IMR-90 (cell line): ENCODE measurements at regions of chr9 and their contacts with region 1.

Region 1: DNA sequence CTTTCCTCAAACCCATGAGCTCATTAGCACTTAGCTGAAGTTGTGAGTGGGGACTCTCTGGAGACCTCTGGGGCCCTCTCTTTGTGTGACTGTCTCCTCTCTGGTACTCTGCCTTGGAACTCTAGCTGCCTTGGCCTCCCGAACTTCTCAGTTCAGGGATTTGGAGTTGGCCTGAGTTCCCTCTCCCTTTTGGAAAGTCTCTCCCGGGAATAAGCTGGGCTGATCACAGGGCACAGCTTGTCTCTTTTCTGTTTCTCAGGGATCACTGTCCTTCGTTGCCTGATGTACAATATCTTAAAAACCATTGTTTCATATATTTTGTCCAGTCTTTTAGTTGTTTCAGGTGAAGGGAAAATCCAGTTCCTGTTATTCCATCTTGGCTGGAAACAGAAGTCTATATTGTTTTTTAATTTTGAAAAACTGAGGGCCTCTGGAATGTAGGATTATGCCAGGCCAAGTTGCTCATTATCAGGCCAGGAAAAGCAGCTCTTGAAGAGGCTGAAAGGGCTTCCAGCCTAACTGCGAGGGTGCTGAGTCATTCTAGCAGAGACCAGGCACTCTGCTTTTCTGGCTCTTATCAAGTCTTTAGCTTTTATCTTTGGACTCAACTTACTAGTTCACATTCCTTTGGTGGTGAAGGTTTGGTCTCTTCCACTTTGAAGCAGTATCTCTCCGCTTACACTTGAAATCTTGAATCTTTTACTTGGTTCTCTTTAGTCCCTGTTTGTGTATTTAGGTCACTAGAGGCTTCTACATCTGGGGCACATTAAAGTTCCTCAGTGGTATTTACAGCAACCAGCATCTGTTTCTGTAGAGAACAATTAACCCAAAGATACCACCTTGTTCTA is 8.4 kb upstream of the RGS3 start:
- DNase-seq: peak; percentile 93
- ATAC-seq: peak; percentile 92
- H3K4me3 ChIP-seq: no peak overlapping the region
- H3K27ac ChIP-seq: peak overlapping the region; percentile 100
- H3K4me1 ChIP-seq: peaks cover 15% of the 10 kb centered on the region
- H3K27me3 ChIP-seq: no peaks in the 10 kb centered on the region
- CTCF ChIP-seq: no peak
- POLR2A ChIP-seq: 0 out of 2 replicates have a peak, but pooled peaks have one; percentile 36
- RAD21 ChIP-seq: 0 out of 2 replicates have a peak, but pooled peaks have one; percentile 11

Region 2: GRCh38 chr9:113485761-113486115 is 30.6 kb after region 1 on chr9:
- CTCF ChIA-PET with region 1: no interaction called
- POLR2A ChIA-PET with region 1: no interaction called
- dilution Hi-C with region 1: no loop called
- in situ Hi-C with region 1: no loop called
- intact Hi-C with region 1: loop called (anchors 1 kb)
- DNase-seq: no peak
- ATAC-seq: no peak; the same call in 1 of the 2 replicates
- H3K4me3 ChIP-seq: no peak overlapping the region
- H3K27ac ChIP-seq: peak overlapping the region; percentile 31
- H3K4me1 ChIP-seq: peaks cover 23% of the 10 kb centered on the region
- H3K27me3 ChIP-seq: no peaks in the 10 kb centered on the region
- CTCF ChIP-seq: no peak
- POLR2A ChIP-seq: no peak
- RAD21 ChIP-seq: no peak

Region 3: DNA sequence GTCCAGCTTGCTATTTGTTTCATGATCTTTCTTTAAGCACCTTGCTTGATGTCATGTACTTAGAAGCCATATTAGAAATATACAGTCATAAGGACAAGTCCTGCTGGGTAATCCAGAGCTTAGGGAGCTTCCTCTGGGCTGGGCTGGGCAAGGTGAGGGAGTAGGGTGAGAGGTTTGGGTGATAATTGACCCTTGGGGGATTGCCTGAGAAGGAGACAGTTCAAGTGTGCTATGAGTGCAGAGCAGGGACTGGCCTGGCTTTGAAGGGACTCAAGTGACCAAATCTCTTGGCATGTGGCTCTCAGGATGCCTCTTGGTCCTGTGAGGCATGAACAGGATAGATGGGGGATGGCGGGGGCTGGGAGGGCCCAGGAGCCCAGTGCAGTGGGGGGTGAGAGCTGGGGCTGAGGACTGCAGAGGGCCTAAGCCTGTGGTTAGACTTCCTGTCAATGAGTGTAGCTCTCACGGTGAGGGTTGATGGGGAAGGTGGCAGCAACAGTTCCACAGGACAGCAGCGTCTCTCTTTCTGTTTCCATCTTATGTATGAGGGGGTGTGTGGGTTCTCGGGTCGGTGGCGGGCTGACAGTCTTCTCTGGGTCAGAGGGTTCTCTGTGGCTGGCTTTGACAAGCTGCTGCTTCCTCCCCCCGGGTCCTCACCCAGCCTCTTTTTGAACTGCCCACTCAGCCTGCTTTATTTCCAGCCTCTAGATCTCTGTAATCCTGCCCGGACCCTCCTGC is 61.9 kb after region 1 on chr9:
- CTCF ChIA-PET with region 1: no interaction called
- POLR2A ChIA-PET with region 1: no interaction called
- dilution Hi-C with region 1: no loop called
- in situ Hi-C with region 1: no loop called
- intact Hi-C with region 1: loop called (anchors 5 kb)
- DNase-seq: peak; percentile 39
- ATAC-seq: no peak
- H3K4me3 ChIP-seq: no peak overlapping the region
- H3K27ac ChIP-seq: no peak overlapping the region
- H3K4me1 ChIP-seq: peaks cover 18% of the 10 kb centered on the region
- H3K27me3 ChIP-seq: peaks cover 4% of the 10 kb centered on the region; the same call in 1 of the 2 replicates
- CTCF ChIP-seq: no peak
- POLR2A ChIP-seq: no peak
- RAD21 ChIP-seq: no peak

Region 4: GRCh38 chr9:113530022-113530635 is 75.0 kb after region 1 on chr9:
- CTCF ChIA-PET with region 1: no interaction called
- POLR2A ChIA-PET with region 1: no interaction called
- dilution Hi-C with region 1: no loop called
- in situ Hi-C with region 1: no loop called
- intact Hi-C with region 1: no loop called
- DNase-seq: no peak
- ATAC-seq: no peak
- H3K4me3 ChIP-seq: no peak overlapping the region
- H3K27ac ChIP-seq: no peak overlapping the region
- H3K4me1 ChIP-seq: peaks cover 2% of the 10 kb centered on the region; the same call in 1 of the 2 replicates
- H3K27me3 ChIP-seq: no peaks in the 10 kb centered on the region
- CTCF ChIP-seq: no peak
- POLR2A ChIP-seq: no peak
- RAD21 ChIP-seq: no peak

Region 5: DNA sequence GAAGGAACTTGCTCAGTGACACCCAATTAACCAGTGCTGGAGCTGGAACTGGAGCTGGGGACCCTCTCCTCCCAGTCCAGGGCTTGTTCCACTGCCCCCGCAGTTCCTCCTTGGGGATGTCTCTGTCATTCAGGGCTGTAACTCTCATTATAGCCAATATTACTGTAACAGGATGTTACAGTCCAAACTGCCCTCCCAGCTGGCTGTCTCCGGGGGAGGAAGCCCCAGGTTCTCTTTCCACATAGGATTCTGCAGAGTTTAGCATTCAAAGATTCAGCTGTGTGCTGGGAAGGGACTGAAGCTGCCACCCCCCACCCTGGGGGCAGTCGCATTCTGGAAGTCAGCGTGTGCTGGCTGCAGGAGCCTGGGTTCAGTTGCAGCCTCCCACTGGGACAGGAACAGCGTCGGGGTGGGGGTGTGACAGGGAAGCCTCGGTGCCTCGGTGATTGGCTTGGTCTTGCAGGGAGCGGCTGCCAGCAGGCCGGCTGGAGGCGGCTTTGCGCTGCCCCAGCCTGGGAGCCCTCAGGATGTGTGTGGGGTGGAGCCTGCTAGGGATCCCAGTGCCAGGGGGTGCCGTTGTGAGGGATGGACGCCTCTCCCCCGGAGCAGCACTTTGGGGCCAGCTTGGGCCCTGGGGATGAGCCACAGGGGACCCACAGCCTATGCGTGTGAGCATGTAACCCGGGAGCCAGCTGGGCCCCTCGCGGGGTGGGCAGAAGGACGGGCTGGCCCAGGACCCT is 109.5 kb after region 1 on chr9:
- CTCF ChIA-PET with region 1: no interaction called
- POLR2A ChIA-PET with region 1: no interaction called
- dilution Hi-C with region 1: no loop called
- in situ Hi-C with region 1: no loop called
- intact Hi-C with region 1: loop called (anchors 5 kb)
- DNase-seq: peak; percentile 61
- ATAC-seq: peak; percentile 86
- H3K4me3 ChIP-seq: peak overlapping the region; percentile 70
- H3K27ac ChIP-seq: peak overlapping the region; percentile 83
- H3K4me1 ChIP-seq: peaks cover 30% of the 10 kb centered on the region
- H3K27me3 ChIP-seq: no peaks in the 10 kb centered on the region
- CTCF ChIP-seq: no peak
- POLR2A ChIP-seq: peak; percentile 59; the same call in 1 of the 2 replicates
- RAD21 ChIP-seq: no peak

Region 6: GRCh38 chr9:113581865-113582697 is 126.9 kb after region 1 on chr9:
- CTCF ChIA-PET with region 1: interaction called, 10 read pairs
- POLR2A ChIA-PET with region 1: interaction called, 4 read pairs
- dilution Hi-C with region 1: no loop called
- in situ Hi-C with region 1: loop called (anchors 5 kb)
- intact Hi-C with region 1: no loop called
- DNase-seq: peak; percentile 84
- ATAC-seq: peak; percentile 27
- H3K4me3 ChIP-seq: no peak overlapping the region
- H3K27ac ChIP-seq: peak overlapping the region; percentile 32; the same call in 1 of the 2 replicates
- H3K4me1 ChIP-seq: peaks cover 40% of the 10 kb centered on the region
- H3K27me3 ChIP-seq: no peaks in the 10 kb centered on the region
- CTCF ChIP-seq: peak; percentile 47
- POLR2A ChIP-seq: no peak
- RAD21 ChIP-seq: peak; percentile 59